T-cell (primary cell): ENCODE measurements at regions of chr9 and their contacts with region 1.

Region 1: GRCh38 chr9:35026671-35027070 is 37.1 kb downstream of the DNAJB5 start:
- DNase-seq: no peak
- ATAC-seq: no peak
- H3K4me3 ChIP-seq: no peak overlapping the region
- H3K4me3 Mint-ChIP-seq: no peak overlapping the region
- H3K27ac ChIP-seq: no peak overlapping the region
- H3K27ac Mint-ChIP-seq: no peak overlapping the region
- H3K4me1 ChIP-seq: peaks cover 3% of the 10 kb centered on the region in 2 experiments
- H3K4me1 Mint-ChIP-seq: peaks cover 8 to 34% (median 20%) of the 10 kb centered on the region in 3 donors
- H3K27me3 ChIP-seq: no peaks in the 10 kb centered on the region
- H3K27me3 Mint-ChIP-seq: no peaks in the 10 kb centered on the region

Region 2: DNA sequence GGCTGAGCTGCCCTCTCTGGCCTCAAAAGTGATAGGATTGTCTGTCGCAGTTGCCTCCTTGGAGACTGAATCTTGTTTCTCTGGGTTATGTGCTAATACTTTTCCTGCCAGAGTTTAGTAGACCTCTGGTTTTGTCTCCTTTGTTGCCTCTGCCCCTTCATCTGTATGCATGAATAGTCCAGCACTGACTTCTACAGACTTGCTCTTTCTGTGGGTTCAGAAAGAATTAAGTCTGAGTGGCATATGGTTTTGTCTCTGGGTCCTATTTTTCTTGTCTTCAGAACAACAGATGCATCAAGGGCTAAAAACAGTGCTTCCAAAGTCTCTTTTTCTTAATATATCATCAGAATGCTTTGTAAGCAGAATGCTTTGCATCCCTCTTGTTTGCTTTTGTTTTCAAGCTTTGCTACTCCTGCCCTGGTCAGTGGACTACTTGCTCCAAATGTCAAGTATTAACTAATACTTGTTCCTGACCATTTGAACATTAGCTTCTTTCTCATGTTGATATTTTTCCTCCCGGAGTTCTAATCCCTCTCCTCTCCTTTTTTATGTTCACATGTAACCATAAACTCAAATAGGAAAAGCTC is 266.8 kb after region 1 on chr9:
- CTCF ChIA-PET with region 1: no interaction called
- POLR2A ChIA-PET with region 1: interaction called in 1 of 2 experiments, 10 read pairs
- DNase-seq: no peak
- ATAC-seq: no peak
- H3K4me3 ChIP-seq: no peak overlapping the region
- H3K4me3 Mint-ChIP-seq: no peak overlapping the region
- H3K27ac ChIP-seq: no peak overlapping the region
- H3K27ac Mint-ChIP-seq: no peak overlapping the region
- H3K4me1 ChIP-seq: no peaks in the 10 kb centered on the region
- H3K4me1 Mint-ChIP-seq: no peaks in the 10 kb centered on the region
- H3K27me3 ChIP-seq: peaks cover 0 to 9% of the 10 kb centered on the region in 2 experiments
- H3K27me3 Mint-ChIP-seq: peaks cover 5 to 21% of the 10 kb centered on the region in 2 donors